ENCODE measurements at regions of chr5 and their contacts with region 1.

Region 1: GRCh38 chr5:39955156-39955555 is 530.4 kb upstream of the DAB2 start:
- DNase-seq: no peak
- ATAC-seq: no peak
- H3K4me3 ChIP-seq: no peak overlapping the region
- H3K27ac ChIP-seq: no peak overlapping the region
- H3K4me1 ChIP-seq: no peaks in the 10 kb centered on the region
- H3K27me3 ChIP-seq: no peaks in the 10 kb centered on the region
- CTCF ChIP-seq: no peak

Region 2: DNA sequence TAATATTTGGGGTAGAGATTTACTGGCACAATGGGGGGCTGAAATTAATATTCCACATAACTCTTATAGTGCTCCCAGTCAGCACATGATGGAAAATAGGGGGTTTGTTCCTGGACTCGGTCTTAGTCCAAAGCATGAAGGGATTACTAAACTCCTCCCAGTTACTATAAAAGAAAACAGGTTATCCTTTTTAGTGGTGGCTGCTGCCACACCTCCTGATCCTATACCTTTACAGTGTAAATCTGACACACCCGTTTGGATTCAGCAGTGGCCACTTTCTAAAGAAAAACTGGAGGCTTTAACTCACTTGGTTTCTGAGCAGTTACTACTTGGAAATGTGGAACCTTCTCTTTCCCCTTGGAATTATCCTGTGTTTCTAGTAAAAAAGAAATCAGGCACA is 151.7 kb after region 1 on chr5:
- intact Hi-C with region 1: loop called in 1 of 10 experiments (anchors 5 kb)
- DNase-seq: no peak
- ATAC-seq: no peak
- H3K4me3 ChIP-seq: no peak overlapping the region
- H3K27ac ChIP-seq: no peak overlapping the region
- H3K4me1 ChIP-seq: peaks cover 0 to 19% (median 0%) of the 10 kb centered on the region in 9 donors
- H3K27me3 ChIP-seq: no peaks in the 10 kb centered on the region
- CTCF ChIP-seq: no peak

Measured in heart right ventricle (tissue), 16 donors.